ENCODE measurements at regions of chr5 and their contacts with region 1.

Region 1: GRCh38 chr5:139403787-139404483 is at the start of gene SPATA24:
- DNase-seq: peak; percentile 93 to 99 (median 98)
- ATAC-seq: peak; percentile 88
- H3K4me3 ChIP-seq: peak within 1 kb of the TSS; percentile 61
- H3K4me3 Mint-ChIP-seq: peak within 1 kb of the TSS; percentile 95
- H3K27ac ChIP-seq: peak within 1 kb of the TSS; percentile 68 to 94
- H3K27ac Mint-ChIP-seq: peak within 1 kb of the TSS; percentile 99
- H3K4me1 ChIP-seq: peaks cover 16% of the 10 kb centered on the region
- H3K4me1 Mint-ChIP-seq: peaks cover 32% of the 10 kb centered on the region
- H3K27me3 ChIP-seq: no peaks in the 10 kb centered on the region
- H3K27me3 Mint-ChIP-seq: no peaks in the 10 kb centered on the region
- CTCF ChIP-seq: no peak
- total RNA-seq, gene SPATA24: 2.2 to 3.0 TPM

Region 2: DNA sequence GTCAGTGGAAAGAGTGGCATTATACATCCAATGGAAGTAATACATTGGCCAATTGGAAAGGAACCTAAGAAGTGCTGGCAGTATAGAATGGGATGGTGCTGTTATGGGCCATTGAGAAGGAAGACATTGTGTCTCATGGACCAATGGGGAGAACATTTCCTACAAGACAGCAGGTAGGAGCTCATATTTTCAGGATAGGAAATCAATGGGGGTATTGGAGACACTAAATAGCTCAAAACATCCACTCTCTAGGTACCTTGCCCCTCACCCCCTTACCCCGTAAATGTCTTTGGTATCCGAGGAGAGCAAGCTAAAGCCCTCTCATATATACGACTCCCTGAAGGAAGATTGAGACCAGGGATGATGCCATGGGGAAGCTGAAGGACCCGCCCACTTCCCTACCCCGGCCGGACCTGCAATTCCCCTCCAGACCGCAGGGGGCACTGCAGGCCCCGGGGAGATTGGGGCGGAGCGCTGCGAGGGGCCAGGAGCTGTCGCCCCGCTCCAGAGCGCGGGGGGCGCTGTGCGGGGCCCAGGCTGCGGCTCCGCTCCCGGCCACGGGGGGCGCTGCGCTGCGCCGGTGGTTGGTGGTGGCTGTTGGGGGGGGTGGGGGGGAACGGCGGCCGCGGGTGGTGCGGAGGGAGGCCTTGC is 1051.7 kb before region 1 on chr5 and contains the start of gene KDM3B:
- CTCF ChIA-PET with region 1: no interaction called
- POLR2A ChIA-PET with region 1: no interaction called
- intact Hi-C with region 1: loop called in 1 of 2 experiments (anchors 5 kb)
- DNase-seq: peak; percentile 86 to 96 (median 92)
- ATAC-seq: peak; percentile 89
- H3K4me3 ChIP-seq: peak within 1 kb of the TSS; percentile 87 to 97
- H3K4me3 Mint-ChIP-seq: peak within 1 kb of the TSS; percentile 97
- H3K27ac ChIP-seq: peak within 1 kb of the TSS; percentile 83 to 89
- H3K27ac Mint-ChIP-seq: peak within 1 kb of the TSS; percentile 97
- H3K4me1 ChIP-seq: peaks cover 34% of the 10 kb centered on the region
- H3K4me1 Mint-ChIP-seq: peaks cover 47% of the 10 kb centered on the region
- H3K27me3 ChIP-seq: no peaks in the 10 kb centered on the region
- H3K27me3 Mint-ChIP-seq: no peaks in the 10 kb centered on the region
- CTCF ChIP-seq: peak; percentile 99
- total RNA-seq, gene KDM3B: 60.2 to 60.3 TPM

Region 3: DNA sequence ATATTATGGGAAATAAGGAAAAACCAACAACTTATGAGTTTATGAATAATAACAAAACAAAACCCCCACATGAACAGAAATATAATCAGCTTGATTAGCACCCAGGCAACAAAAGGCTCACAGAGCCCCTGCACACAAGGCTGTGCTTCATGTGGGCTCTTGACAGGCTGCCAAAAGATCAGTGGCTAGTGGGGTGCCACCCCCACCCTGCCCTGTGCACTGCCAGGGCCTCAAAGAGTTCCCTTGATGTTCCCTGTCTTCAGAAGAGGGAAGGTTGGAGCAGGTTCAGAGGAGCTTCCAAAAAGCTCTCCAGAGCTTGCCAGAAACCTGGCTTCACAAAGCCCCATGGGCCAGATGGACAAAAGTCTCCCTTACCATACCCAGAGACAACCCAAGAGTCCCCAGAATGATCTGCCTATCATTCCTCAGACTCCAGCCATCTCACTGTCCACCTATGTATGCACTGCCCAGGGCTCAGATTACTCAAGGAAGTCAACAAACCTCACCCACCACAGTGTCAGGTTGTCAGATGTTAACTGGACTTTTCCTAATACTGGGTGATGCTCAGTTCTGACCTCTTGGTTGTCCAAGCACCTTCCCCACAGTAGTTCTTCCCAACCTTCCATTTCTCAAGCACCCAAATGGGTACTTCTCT is 293.3 kb before region 1 on chr5:
- CTCF ChIA-PET with region 1: no interaction called
- POLR2A ChIA-PET with region 1: no interaction called
- intact Hi-C with region 1: no loop called
- DNase-seq: no peak
- ATAC-seq: no peak
- H3K4me3 ChIP-seq: no peak overlapping the region
- H3K4me3 Mint-ChIP-seq: no peak overlapping the region
- H3K27ac ChIP-seq: no peak overlapping the region
- H3K27ac Mint-ChIP-seq: no peak overlapping the region
- H3K4me1 ChIP-seq: no peaks in the 10 kb centered on the region
- H3K4me1 Mint-ChIP-seq: no peaks in the 10 kb centered on the region
- H3K27me3 ChIP-seq: no peaks in the 10 kb centered on the region
- H3K27me3 Mint-ChIP-seq: no peaks in the 10 kb centered on the region
- CTCF ChIP-seq: no peak

Region 4: GRCh38 chr5:139197710-139198669 is 205.9 kb before region 1 on chr5 and contains the start of gene SIL1:
- CTCF ChIA-PET with region 1: no interaction called
- POLR2A ChIA-PET with region 1: no interaction called
- intact Hi-C with region 1: loop called in 1 of 2 experiments (anchors 5 kb)
- DNase-seq: peak; percentile 94 to 98 (median 96)
- ATAC-seq: peak; percentile 98
- H3K4me3 ChIP-seq: peak within 1 kb of the TSS; percentile 60 to 70
- H3K4me3 Mint-ChIP-seq: peak within 1 kb of the TSS; percentile 84
- H3K27ac ChIP-seq: peak within 1 kb of the TSS; percentile 82 to 84
- H3K27ac Mint-ChIP-seq: peak within 1 kb of the TSS; percentile 91
- H3K4me1 ChIP-seq: peaks cover 8% of the 10 kb centered on the region
- H3K4me1 Mint-ChIP-seq: peaks cover 24% of the 10 kb centered on the region
- H3K27me3 ChIP-seq: no peaks in the 10 kb centered on the region
- H3K27me3 Mint-ChIP-seq: no peaks in the 10 kb centered on the region
- CTCF ChIP-seq: no peak
- total RNA-seq, gene SIL1: 14.0 to 19.5 TPM

Region 5: DNA sequence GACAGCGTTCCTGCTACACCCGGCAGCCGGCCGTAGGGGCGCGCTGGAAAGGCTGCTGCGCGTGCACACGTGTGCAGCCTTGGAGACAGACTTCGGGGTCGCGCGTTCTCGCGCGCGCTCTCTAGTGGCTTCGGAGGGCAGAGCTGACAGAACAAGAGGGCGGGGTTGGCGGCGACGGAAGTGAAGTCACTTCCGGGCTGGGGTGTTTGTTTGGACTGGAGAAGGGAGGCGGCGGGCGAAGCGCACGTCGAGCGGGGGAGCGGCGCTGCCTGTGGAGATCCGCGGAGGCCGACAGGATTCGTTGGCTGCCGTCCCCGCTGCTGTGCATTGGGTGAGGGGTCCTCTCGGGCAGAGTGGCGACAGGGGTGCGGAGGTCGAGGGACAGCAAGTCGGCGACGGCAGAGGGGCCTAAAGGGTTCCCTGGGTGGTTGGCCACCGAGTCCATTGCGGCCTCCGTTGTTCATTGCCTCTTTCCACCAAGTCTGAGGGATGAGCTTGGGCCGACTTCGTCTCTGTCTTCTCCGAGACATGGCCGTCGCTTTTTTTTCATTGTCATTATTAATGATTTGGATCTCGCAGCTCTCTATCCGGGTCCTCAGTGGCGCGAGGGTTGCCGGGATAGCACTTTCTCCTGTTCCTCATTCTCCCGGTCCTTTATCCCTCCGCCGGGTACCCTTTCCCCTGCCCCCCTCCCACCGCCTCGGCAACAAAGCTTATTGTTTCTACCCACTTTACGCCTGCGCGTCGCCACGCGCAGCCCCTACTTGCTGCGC is 62.1 kb before region 1 on chr5 and contains the start of gene PAIP2:
- CTCF ChIA-PET with region 1: no interaction called
- POLR2A ChIA-PET with region 1: interaction called, 18 read pairs
- intact Hi-C with region 1: loop called in 1 of 2 experiments (anchors 1 kb)
- DNase-seq: peak; percentile 96 to 99 (median 98)
- ATAC-seq: peak; percentile 79
- H3K4me3 ChIP-seq: peak within 1 kb of the TSS; percentile 92 to 100
- H3K4me3 Mint-ChIP-seq: peak within 1 kb of the TSS; percentile 99
- H3K27ac ChIP-seq: peak within 1 kb of the TSS; percentile 100
- H3K27ac Mint-ChIP-seq: peak within 1 kb of the TSS; percentile 100
- H3K4me1 ChIP-seq: peaks cover 36% of the 10 kb centered on the region
- H3K4me1 Mint-ChIP-seq: peaks cover 48% of the 10 kb centered on the region
- H3K27me3 ChIP-seq: no peaks in the 10 kb centered on the region
- H3K27me3 Mint-ChIP-seq: no peaks in the 10 kb centered on the region
- CTCF ChIP-seq: peak; percentile 68
- total RNA-seq, gene PAIP2: 173 to 179 TPM

Region 6: GRCh38 chr5:139439013-139439903 is 35.3 kb after region 1 on chr5 and contains the start of gene DNAJC18:
- CTCF ChIA-PET with region 1: no interaction called
- POLR2A ChIA-PET with region 1: interaction called, 3 read pairs
- intact Hi-C with region 1: loop called (anchors 1 kb)
- DNase-seq: peak; percentile 78 to 93 (median 90)
- ATAC-seq: peak; percentile 88
- H3K4me3 ChIP-seq: peak within 1 kb of the TSS; percentile 95 to 98
- H3K4me3 Mint-ChIP-seq: peak within 1 kb of the TSS; percentile 98
- H3K27ac ChIP-seq: peak within 1 kb of the TSS; percentile 97 to 98
- H3K27ac Mint-ChIP-seq: peak within 1 kb of the TSS; percentile 99
- H3K4me1 ChIP-seq: peaks cover 24% of the 10 kb centered on the region
- H3K4me1 Mint-ChIP-seq: peaks cover 33% of the 10 kb centered on the region
- H3K27me3 ChIP-seq: no peaks in the 10 kb centered on the region
- H3K27me3 Mint-ChIP-seq: no peaks in the 10 kb centered on the region
- CTCF ChIP-seq: no peak
- total RNA-seq, gene DNAJC18: 8.0 to 10.2 TPM

Region 7: DNA sequence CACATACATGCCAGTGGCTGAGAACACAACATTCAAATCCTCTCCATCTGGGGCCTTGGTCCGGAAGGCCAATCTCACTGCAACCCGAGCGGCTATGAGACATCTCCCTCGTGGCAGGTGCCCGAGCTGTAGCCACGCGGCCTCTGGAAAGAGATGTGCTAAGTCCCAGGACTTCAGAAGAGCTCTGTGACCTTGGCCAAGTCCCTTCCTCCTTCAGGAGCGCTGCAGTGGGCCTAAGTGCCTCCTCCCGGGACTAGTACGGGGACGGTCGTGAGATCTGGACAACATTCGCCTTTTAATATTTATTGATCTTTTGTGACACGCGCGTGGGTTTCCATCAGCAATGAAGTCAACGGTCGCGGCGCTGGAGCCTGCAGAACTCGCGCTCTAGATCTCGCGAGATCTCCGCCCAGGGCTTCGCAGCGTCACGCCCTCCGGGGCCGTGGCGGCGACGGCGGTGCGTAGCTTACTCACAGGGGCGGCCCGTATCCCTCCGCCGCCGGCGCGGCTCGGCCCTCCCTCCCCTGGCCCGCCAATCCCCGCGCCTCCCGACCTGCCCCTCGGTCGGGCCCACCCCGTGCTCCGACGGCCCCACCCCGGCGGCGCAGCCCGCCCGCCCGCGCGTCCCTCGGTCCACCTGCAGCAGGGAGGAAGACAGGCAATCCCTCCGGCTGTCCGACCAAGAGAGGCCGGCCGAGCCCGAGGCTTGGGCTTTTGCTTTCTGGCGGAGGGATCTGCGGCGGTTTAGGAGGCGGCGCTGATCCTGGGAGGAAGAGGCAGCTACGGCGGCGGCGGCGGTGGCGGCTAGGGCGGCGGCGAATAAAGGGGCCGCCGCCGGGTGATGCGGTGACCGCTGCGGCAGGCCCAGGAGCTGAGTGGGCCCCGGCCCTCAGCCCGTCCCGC is 157.1 kb after region 1 on chr5 and contains the start of gene UBE2D2:
- CTCF ChIA-PET with region 1: no interaction called
- POLR2A ChIA-PET with region 1: interaction called, 5 read pairs
- intact Hi-C with region 1: loop called (anchors 1 kb)
- DNase-seq: peak; percentile 96 to 99 (median 97)
- ATAC-seq: peak; percentile 84
- H3K4me3 ChIP-seq: peak within 1 kb of the TSS; percentile 84 to 91
- H3K4me3 Mint-ChIP-seq: peak within 1 kb of the TSS; percentile 93
- H3K27ac ChIP-seq: peak within 1 kb of the TSS; percentile 87 to 89
- H3K27ac Mint-ChIP-seq: peak within 1 kb of the TSS; percentile 97
- H3K4me1 ChIP-seq: peaks cover 30% of the 10 kb centered on the region
- H3K4me1 Mint-ChIP-seq: peaks cover 35% of the 10 kb centered on the region
- H3K27me3 ChIP-seq: no peaks in the 10 kb centered on the region
- H3K27me3 Mint-ChIP-seq: no peaks in the 10 kb centered on the region
- CTCF ChIP-seq: no peak
- total RNA-seq, gene UBE2D2: 180 TPM

Measured in CD8-positive, alpha-beta T cell (primary cell).